Right cardiac atrium (tissue), 5 donors: ENCODE measurements at regions of chr2 and their contacts with region 1.

Region 1: DNA sequence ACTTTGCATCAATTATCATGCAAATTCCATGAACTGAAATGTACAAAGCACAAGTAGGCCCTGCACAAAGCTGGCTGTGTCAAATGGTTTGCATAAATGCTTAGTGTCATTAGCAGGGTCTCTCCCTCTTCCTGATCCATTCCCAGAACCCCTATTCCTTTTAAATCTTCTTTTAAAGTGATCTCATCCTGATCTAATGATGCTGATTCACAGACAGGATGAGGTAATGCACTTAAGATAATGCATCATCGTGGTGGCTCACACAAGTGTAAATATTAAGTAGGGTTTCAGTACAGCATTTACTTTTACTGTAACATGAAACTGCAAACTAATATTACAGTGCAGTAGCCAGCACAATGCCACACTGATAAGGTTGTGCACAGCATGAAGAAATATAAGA is 304.8 kb upstream of the SOX11 start:
- DNase-seq: no peak
- ATAC-seq: no peak
- H3K4me3 ChIP-seq: no peak overlapping the region
- H3K27ac ChIP-seq: no peak overlapping the region
- H3K4me1 ChIP-seq: no peaks in the 10 kb centered on the region
- H3K27me3 ChIP-seq: no peaks in the 10 kb centered on the region

Region 2: GRCh38 chr2:5343785-5344335 is 43.6 kb before region 1 on chr2:
- intact Hi-C with region 1: no loop called
- DNase-seq: no peak
- ATAC-seq: no peak
- H3K4me3 ChIP-seq: no peak overlapping the region
- H3K27ac ChIP-seq: no peak overlapping the region
- H3K4me1 ChIP-seq: no peaks in the 10 kb centered on the region
- H3K27me3 ChIP-seq: no peaks in the 10 kb centered on the region

Region 3: DNA sequence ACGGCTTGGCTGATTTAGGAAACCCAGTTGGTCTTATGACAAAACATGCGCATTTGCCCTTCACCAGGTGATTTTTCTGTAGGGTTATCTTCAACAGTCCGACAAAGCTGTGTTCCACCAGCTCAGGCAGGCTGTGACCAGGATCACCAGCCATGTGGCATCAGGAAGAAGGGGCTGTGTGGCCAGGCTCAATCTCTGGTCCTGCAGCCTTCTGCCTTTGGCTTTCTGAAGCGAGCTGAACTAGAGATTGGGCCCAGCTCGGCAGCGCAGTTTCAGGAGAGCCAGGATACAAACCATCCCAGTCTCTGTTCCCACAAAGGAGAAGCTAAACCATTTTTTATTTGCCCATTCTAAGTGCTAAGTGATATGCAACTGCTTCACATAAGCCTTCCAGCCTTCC is 587.1 kb after region 1 on chr2:
- intact Hi-C with region 1: loop called in 1 of 4 experiments (anchors 5 kb)
- DNase-seq: no peak
- ATAC-seq: no peak
- H3K4me3 ChIP-seq: no peak overlapping the region
- H3K27ac ChIP-seq: no peak overlapping the region
- H3K4me1 ChIP-seq: no peaks in the 10 kb centered on the region
- H3K27me3 ChIP-seq: no peaks in the 10 kb centered on the region

Region 4: GRCh38 chr2:6024784-6025183 is 637.4 kb after region 1 on chr2:
- intact Hi-C with region 1: no loop called
- DNase-seq: no peak
- ATAC-seq: no peak
- H3K4me3 ChIP-seq: no peak overlapping the region
- H3K27ac ChIP-seq: no peak overlapping the region
- H3K4me1 ChIP-seq: no peaks in the 10 kb centered on the region
- H3K27me3 ChIP-seq: no peaks in the 10 kb centered on the region